ENCODE measurements at regions of chr17 and their contacts with region 1.

Region 1: DNA sequence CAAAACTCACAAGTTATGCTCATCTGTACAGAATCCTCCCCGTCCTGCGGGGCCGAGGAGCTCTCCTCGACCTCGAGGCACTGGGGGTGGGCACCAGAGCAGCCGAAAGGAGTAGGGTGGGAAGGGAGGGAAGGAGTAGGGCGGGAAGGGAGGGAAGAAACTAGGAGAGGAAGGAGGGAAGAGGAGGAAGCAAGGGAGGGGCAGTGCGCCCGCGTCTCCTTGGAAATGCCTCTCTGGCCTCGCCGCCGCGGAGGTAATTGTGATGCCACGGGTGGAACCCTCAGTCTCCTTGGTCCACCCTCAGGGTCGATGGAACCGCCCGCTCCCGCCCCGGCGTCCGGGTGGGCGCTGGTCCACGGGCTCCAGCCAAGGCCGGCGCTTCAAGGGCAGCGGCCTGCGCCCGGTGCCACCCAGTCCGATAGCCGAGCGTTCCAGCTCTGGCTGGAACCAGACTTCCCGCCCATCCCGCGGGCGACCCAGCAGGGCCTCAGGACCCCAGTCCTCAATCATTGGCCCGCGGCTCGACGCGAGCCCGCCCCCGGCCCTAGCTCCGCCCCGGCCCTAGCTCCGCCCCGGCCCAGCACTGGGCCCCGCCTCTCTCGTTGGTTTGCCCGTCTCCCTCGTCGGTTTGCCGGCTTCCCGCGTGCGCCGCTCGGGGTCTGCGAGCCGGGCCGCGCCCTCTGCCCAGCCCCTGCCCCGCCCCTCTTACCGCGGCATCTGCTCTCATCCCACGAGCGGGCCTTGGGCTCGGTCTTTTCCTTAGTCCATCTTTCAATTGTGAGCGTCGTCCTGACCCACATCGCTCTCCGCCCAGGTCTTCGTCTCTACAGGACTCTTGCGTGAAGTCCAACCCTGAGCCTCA is 596 bp downstream of the PROCA1 start:
- DNase-seq: peak; percentile 98
- ATAC-seq: peak; percentile 88
- H3K4me3 Mint-ChIP-seq: peak overlapping the region; percentile 98
- H3K27ac Mint-ChIP-seq: peak overlapping the region; percentile 100
- H3K4me1 Mint-ChIP-seq: peaks cover 32% of the 10 kb centered on the region
- H3K27me3 Mint-ChIP-seq: no peaks in the 10 kb centered on the region
- CTCF ChIP-seq: no peak

Region 2: DNA sequence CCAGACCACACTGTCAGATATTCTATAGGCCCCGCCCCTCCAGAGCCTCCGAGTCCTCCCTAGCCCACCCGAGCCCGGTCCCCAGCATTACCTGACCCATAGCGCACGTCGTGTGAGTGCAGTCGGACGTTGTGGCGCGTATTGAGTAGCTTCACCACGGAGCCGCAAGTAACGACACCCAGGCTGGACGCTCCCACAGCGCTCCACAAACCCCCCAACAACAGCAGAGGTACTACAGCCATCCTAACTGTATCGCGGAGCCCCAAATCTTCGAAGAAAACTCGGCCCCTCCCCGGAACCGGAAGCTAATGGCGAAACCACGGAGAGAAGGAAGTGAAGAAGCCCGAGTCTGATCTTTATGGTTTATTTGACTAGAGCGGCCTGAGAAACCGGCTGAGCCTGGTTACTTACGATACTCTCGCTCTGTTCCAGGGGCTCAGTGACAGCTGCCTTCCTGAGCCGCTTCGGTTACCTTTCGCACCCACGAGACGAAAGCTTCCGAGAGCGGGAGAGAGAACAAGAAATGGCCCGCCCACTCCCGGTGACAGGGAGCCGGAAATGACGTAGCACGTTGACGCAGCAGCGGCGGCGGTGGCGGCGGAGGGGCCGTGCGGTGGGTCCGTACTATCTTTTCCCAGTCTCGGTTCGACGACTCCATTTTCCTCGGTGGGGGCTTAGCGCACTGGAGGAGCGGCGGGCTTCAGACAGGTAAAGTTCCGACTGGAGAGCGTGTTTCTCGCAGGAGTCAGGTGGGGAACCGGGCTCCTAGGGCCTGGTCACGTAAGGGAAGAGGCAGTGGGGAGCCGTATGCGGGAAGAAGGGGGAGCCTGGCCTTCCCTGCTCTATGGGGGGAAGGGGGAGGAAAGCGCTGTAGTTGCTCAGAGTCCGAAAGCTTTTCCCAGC is 49.2 kb before region 1 on chr17 and contains the starts of genes SDF2 and SUPT6H:
- CTCF ChIA-PET with region 1: interaction called, 3 read pairs
- POLR2A ChIA-PET with region 1: interaction called, 13 read pairs
- DNase-seq: peak; percentile 92
- ATAC-seq: peak; percentile 80
- H3K4me3 Mint-ChIP-seq: peak within 1 kb of the TSS; percentile 99
- H3K27ac Mint-ChIP-seq: peak within 1 kb of the TSS; percentile 100
- H3K4me1 Mint-ChIP-seq: peaks cover 20% of the 10 kb centered on the region
- H3K27me3 Mint-ChIP-seq: 0 out of 2 replicates have a peak, but pooled peaks cover 3% of the 10 kb centered on the region
- CTCF ChIP-seq: no peak
- total RNA-seq, gene SDF2: 44.4 to 49.4 TPM (median 45.9 TPM) in 3 replicates
- total RNA-seq, gene SUPT6H: 49.1 to 61.3 TPM (median 54.5 TPM) in 3 replicates

Region 3: GRCh38 chr17:28743225-28744103 is 32.4 kb after region 1 on chr17 and contains the start of gene TRAF4:
- CTCF ChIA-PET with region 1: interaction called, 9 read pairs
- POLR2A ChIA-PET with region 1: interaction called, 11 read pairs
- DNase-seq: peak; percentile 83
- ATAC-seq: peak; percentile 57
- H3K4me3 Mint-ChIP-seq: peak within 1 kb of the TSS; percentile 88
- H3K27ac Mint-ChIP-seq: peak within 1 kb of the TSS; percentile 94
- H3K4me1 Mint-ChIP-seq: peaks cover 39% of the 10 kb centered on the region
- H3K27me3 Mint-ChIP-seq: no peaks in the 10 kb centered on the region
- CTCF ChIP-seq: no peak
- total RNA-seq, gene TRAF4: 192 to 268 TPM (median 192 TPM) in 3 replicates

Measured in WTC11 (cell line).